ENCODE measurements at regions of chr14 and their contacts with region 1.

Region 1: DNA sequence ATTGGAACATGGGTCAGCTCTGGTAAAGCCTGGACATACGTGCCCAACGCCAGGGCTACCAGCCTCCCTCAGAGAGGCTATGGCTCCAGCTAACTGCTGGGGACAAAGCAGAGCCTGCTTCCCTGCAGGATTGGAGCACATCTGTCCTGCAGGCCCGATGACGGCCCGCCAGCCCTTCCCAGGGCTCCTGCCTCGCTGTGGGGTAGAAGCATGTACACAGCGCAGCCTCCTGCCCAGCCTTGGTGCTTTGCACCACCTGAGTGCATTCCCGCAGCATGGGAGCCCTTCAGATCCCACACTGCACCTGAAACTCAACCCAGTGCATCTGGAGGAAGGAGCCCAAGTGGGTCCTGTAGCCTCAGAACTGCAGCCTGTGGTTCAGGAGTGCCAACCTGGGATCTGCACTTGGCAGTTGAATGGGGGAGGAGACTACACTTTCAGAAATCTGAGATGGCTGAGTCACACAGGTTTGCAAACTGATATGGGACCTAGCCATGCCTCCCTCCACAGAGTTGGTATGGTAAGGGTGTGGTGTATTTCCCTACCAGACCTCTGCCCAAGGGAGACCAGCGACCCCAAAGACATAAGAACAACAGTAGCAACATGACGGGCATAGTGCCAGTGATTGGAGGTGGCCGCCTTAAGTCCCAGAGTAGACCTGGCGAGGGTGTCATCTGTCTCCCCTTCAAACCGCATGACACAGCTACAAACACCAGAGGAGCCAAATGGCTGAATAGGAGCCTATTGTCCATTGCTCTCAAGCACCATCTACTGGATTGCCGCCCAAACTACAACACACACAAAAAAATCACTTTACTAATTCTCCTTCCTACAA is 273.9 kb upstream of the MIS18BP1 start:
- ATAC-seq: peak in 4 of 8 experiments; percentile 51 to 94 (median 76)
- H3K4me3 ChIP-seq: no peak overlapping the region
- H3K27ac ChIP-seq: no peak overlapping the region
- H3K4me1 ChIP-seq: no peaks in the 10 kb centered on the region

Region 2: DNA sequence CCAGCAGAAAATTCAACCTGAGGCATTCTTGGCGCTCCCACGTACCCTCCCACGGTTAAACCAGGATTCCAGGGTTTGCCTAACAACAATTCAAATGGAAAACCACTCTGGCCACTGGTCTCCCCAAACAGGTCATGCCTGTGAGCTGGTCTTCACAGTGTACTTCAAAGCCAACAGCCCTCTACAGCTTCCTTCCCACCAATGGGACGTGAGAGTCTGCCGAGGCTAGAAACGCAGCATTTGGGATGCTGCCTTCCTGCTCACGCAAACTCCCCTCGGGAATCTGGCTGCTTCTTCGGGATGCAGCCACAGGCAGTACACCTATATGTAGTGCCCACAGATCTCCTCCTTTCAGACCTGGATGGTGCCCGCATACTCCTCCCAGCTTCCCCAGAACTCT is 714.3 kb before region 1 on chr14:
- in situ Hi-C with region 1: no loop called
- ATAC-seq: no peak
- H3K4me3 ChIP-seq: no peak overlapping the region
- H3K27ac ChIP-seq: no peak overlapping the region
- H3K4me1 ChIP-seq: peaks cover 0 to 4% of the 10 kb centered on the region in 2 donors

Region 3: GRCh38 chr14:45028107-45028626 is 498.8 kb before region 1 on chr14:
- in situ Hi-C with region 1: no loop called
- ATAC-seq: no peak
- H3K4me3 ChIP-seq: no peak overlapping the region
- H3K27ac ChIP-seq: no peak overlapping the region
- H3K4me1 ChIP-seq: no peaks in the 10 kb centered on the region

Region 4: GRCh38 chr14:45426670-45427282 is 100.2 kb before region 1 on chr14:
- in situ Hi-C with region 1: loop called in 1 of 9 experiments (anchors 10 kb)
- ATAC-seq: peak in 4 of 8 experiments; percentile 26 to 85 (median 76)
- H3K4me3 ChIP-seq: no peak overlapping the region
- H3K27ac ChIP-seq: no peak overlapping the region
- H3K4me1 ChIP-seq: no peaks in the 10 kb centered on the region

Region 5: GRCh38 chr14:46054526-46054925 is 527.6 kb after region 1 on chr14:
- in situ Hi-C with region 1: no loop called
- ATAC-seq: no peak
- H3K4me3 ChIP-seq: no peak overlapping the region
- H3K27ac ChIP-seq: no peak overlapping the region
- H3K4me1 ChIP-seq: peaks cover 0 to 15% of the 10 kb centered on the region in 2 donors

Measured in motor neuron (in vitro differentiated cells).